ENCODE measurements at regions of chr22 and their contacts with region 1.

Region 1: DNA sequence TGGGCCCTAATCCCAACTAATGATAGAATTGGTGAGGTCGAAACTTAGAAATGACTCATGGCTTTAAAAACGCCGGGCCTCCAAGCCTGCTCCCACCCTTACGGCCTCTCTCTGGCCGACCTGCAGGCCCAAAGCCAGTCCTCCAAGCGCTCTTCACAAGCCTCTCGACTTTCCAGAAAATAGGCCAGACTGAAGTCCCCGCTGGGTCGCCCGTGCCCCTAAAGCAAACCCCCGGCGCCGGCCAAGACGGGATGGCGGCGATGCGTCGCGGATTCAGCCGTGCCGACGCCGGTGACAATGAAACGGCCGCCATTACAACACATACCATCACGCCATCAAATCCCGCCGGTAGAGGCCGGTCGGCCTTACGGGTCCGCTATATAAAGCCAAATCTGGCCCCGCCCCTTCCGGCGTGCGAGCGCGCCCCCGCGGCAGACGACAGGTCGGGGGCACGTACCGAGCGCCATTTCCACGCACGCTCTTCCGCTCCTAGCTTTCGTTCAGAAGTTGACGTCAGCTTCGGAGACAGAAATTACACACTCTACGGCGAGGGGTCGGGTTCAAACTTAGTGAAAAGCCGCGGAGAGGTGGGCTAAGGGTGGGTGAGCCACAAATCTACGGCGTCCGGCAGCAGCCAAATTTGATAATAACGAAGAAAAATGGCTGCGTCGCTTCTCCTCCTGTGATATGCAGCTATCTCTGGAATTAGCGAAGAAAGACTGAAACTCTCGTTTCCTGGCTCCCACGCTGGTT is at the start of gene RPL3:
- DNase-seq: peak; percentile 100
- ATAC-seq: peak; percentile 86
- H3K4me3 ChIP-seq: peak within 1 kb of the TSS; percentile 80 to 99 (median 85)
- H3K4me3 Mint-ChIP-seq: peak within 1 kb of the TSS; percentile 99
- H3K27ac ChIP-seq: peak within 1 kb of the TSS; percentile 90 to 95
- H3K27ac Mint-ChIP-seq: peak within 1 kb of the TSS; percentile 98
- H3K4me1 ChIP-seq: peaks cover 27 to 38% of the 10 kb centered on the region in 2 donors
- H3K4me1 Mint-ChIP-seq: peaks cover 38% of the 10 kb centered on the region
- H3K27me3 ChIP-seq: no peaks in the 10 kb centered on the region
- H3K27me3 Mint-ChIP-seq: no peaks in the 10 kb centered on the region
- CTCF ChIP-seq: no peak
- total RNA-seq, gene RPL3: 2,562 and 2,665 TPM in 2 replicates

Region 2: GRCh38 chr22:38755911-38756532 is 563.4 kb before region 1 on chr22 and contains the start of gene SUN2:
- CTCF ChIA-PET with region 1: no interaction called
- POLR2A ChIA-PET with region 1: interaction called, 4 read pairs
- intact Hi-C with region 1: loop called (anchors 5 kb)
- DNase-seq: peak; percentile 94
- ATAC-seq: peak; percentile 74
- H3K4me3 ChIP-seq: peak within 1 kb of the TSS; percentile 59 to 97 (median 82)
- H3K4me3 Mint-ChIP-seq: peak within 1 kb of the TSS; percentile 100
- H3K27ac ChIP-seq: peak within 1 kb of the TSS; percentile 71 to 81
- H3K27ac Mint-ChIP-seq: peak within 1 kb of the TSS; percentile 99
- H3K4me1 ChIP-seq: peaks cover 63 to 82% of the 10 kb centered on the region in 2 donors
- H3K4me1 Mint-ChIP-seq: peaks cover 65% of the 10 kb centered on the region
- H3K27me3 ChIP-seq: no peaks in the 10 kb centered on the region
- H3K27me3 Mint-ChIP-seq: no peaks in the 10 kb centered on the region
- CTCF ChIP-seq: no peak
- total RNA-seq, gene SUN2: 305 and 322 TPM in 2 replicates

Region 3: GRCh38 chr22:39152511-39153219 is 166.8 kb before region 1 on chr22 and contains the start of gene CBX7:
- CTCF ChIA-PET with region 1: interaction called, 13 read pairs
- POLR2A ChIA-PET with region 1: interaction called, 40 read pairs
- intact Hi-C with region 1: loop called (anchors 1 kb)
- DNase-seq: peak; percentile 96
- ATAC-seq: peak; percentile 88
- H3K4me3 ChIP-seq: peak within 1 kb of the TSS; percentile 53 to 97 (median 87)
- H3K4me3 Mint-ChIP-seq: peak within 1 kb of the TSS; percentile 90
- H3K27ac ChIP-seq: peak within 1 kb of the TSS; percentile 81 to 97
- H3K27ac Mint-ChIP-seq: peak within 1 kb of the TSS; percentile 90
- H3K4me1 ChIP-seq: peaks cover 51 to 53% of the 10 kb centered on the region in 2 donors
- H3K4me1 Mint-ChIP-seq: peaks cover 43% of the 10 kb centered on the region
- H3K27me3 ChIP-seq: peaks cover 0 to 14% (median 8%) of the 10 kb centered on the region in 4 experiments
- H3K27me3 Mint-ChIP-seq: peaks cover 33% of the 10 kb centered on the region
- CTCF ChIP-seq: no peak
- total RNA-seq, gene CBX7: 141 and 147 TPM in 2 replicates

Region 4: DNA sequence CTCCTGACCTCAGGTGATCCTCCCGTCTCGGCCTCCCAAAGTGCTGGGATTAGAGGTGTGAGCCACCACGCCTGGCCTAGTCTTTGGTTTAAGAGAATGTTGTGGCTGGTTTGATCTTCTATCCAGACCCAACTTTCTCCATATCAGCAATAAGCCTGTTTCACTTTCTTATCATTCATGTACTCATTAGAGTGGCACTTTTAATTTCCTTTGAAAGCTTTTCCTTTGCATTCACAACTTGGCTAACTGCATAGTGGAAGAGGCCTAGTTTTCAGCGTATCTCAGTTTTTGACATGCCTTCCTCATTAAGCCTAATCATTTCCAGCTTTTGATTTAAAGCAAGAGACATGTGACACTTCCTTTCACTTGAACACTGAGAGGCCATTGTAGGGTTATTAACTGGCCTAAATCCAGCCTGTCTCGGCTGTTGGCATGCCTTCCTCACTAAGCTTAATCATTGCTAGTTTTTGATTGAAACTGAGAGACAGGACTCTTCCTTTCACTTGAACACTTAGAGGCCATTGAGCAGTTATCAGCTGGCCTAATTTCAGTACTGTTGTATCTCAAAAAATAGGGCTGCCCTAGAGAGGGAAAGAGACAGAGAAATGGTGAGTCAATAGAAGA is 13.1 kb after region 1 on chr22:
- CTCF ChIA-PET with region 1: interaction called, 31 read pairs
- POLR2A ChIA-PET with region 1: interaction called, 4 read pairs
- intact Hi-C with region 1: no loop called
- DNase-seq: no peak
- ATAC-seq: no peak
- H3K4me3 ChIP-seq: no peak overlapping the region
- H3K4me3 Mint-ChIP-seq: no peak overlapping the region
- H3K27ac ChIP-seq: no peak overlapping the region
- H3K27ac Mint-ChIP-seq: no peak overlapping the region
- H3K4me1 ChIP-seq: no peaks in the 10 kb centered on the region
- H3K4me1 Mint-ChIP-seq: no peaks in the 10 kb centered on the region
- H3K27me3 ChIP-seq: no peaks in the 10 kb centered on the region
- H3K27me3 Mint-ChIP-seq: no peaks in the 10 kb centered on the region
- CTCF ChIP-seq: no peak

Region 5: DNA sequence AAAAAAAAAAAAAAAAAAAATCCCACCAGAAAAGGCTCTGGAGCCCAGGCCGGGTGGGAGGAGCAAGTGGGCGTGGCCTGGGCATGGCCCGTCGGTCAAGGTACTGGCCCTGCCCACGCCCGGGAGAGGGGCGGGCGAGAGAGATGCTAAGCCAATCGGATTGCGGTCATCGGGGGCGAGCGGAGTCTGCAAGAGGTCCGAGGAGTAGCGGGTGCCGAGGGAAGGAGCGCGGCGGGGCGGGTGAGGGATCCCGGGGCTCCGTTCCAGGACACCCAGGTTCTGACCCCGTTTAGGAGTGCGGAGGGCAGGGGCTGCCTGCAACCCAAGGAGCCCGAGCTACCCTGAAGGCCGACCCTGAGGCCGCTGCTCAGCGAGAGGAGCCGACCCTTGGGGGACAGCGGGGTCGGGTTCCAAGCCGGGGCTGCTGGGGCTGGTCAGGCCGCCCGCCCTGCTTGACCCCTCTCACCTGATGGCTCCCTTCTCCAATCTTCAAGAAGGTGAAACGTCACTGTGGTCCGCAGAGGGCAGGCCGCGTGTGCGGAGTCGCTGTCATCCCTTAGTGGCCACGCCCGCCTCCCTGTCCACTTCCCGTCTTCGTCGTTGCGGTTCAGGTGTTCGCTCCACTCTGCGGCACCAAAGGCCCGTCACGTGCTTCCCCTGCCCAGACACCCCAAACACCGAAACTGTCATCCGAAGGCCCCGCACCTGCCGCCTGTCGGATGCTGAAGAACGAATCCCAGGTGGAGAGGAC is 69.0 kb after region 1 on chr22:
- CTCF ChIA-PET with region 1: interaction called, 3 read pairs
- POLR2A ChIA-PET with region 1: interaction called, 10 read pairs
- intact Hi-C with region 1: loop called (anchors 1 kb)
- DNase-seq: peak; percentile 91
- ATAC-seq: peak; percentile 88
- H3K4me3 ChIP-seq: peak overlapping the region in 4 of 5 experiments; percentile 61 to 76 (median 69)
- H3K4me3 Mint-ChIP-seq: peak overlapping the region; percentile 90
- H3K27ac ChIP-seq: peak overlapping the region; percentile 68 to 70
- H3K27ac Mint-ChIP-seq: peak overlapping the region; percentile 91
- H3K4me1 ChIP-seq: peaks cover 0 to 14% of the 10 kb centered on the region in 2 donors
- H3K4me1 Mint-ChIP-seq: peaks cover 10% of the 10 kb centered on the region
- H3K27me3 ChIP-seq: no peaks in the 10 kb centered on the region
- H3K27me3 Mint-ChIP-seq: no peaks in the 10 kb centered on the region
- CTCF ChIP-seq: peak; percentile 22